ENCODE measurements at regions of chr5 and their contacts with region 1.

Region 1: DNA sequence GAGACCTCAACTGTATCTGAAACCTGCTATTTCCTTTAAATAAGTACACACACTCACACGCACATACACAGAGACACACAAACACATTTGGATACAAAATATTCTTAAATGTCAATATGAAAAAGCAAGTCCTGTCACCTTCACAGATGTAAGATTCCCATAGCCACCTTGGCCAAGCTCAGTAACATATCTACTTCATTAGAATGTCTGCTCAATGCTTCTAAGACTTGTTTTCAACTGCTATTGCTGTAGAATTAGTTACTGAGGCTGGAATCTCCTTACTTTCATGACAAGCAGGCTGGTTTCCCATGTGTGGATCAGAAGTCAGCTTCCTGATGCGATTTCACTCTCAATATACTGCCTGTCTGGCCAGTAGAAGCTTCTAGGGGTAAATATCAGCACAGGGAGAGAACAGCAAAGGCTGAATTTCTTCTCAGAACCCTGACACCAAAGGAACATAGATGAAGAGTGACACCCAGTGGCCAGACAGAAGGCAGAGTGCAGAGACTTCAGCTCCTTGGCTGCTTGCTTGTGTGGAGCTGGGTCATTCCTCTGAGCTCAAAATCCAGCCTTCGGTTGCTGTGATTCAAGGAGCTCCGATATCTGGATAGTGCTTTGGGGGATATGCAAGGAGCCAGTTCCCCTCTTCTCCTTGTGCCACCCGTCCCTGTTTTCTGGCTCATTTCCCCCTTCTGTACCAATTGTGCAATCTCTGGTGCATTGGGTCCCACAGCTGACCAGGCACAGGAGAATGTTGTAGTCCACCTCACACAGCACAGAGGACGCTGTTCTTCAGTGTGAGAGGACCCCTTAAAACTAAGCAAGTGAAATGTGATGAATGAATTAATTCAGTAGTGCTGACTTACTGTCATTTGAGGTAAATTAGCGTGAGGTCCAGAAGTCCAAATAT is 26.6 kb upstream of the ABLIM3 start:
- DNase-seq: peak; percentile 59
- ATAC-seq: peak; percentile 99
- H3K4me3 Mint-ChIP-seq: no peak overlapping the region
- H3K27ac Mint-ChIP-seq: no peak overlapping the region
- H3K4me1 Mint-ChIP-seq: no peaks in the 10 kb centered on the region
- H3K27me3 Mint-ChIP-seq: no peaks in the 10 kb centered on the region; the same call in 1 of the 2 replicates
- CTCF ChIP-seq: peak; percentile 48

Region 2: DNA sequence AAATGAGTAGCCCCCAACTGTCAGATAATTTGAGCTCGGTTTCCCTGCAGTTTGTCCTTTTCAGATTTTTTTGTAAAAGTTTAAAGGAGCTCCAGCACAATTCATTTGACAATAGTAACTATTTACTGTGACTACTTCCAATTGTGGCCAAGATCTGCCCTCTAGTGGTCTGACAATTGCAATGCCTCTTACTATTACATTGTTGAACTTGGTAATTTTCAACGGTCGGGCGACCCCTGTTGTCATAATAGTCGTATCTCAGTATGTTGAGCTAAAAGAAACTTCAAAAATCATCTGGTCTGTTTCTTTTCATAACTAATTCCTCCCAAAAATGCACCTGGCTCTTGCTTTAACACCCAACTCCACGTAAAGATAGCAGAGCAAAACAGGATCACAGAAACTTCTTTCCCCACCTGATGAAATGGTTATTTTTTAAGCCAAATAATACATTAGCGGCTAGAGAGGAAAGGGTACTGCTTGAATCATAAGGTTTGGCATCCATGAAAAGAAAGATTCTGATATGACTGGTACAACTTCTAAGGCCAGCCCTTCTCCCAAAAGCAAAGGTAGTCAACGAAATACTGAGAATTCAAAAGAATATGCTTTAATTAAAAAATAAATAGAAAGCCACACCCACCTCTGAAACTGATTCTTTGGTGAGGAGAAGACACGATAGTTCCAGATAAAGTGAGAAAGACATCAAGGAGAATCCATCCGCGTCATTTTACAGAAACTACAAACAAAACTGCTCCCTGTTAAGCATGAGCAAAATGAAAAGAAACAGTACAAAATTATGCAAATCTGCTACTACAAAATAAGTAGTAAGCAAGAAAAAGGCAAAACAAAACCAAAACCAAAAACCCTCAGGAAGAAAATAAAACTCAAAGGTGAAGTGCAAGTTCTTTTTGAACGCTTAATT is 383.5 kb before region 1 on chr5:
- CTCF ChIA-PET with region 1: interaction called, 78 read pairs
- POLR2A ChIA-PET with region 1: no interaction called
- DNase-seq: peak; percentile 59
- ATAC-seq: peak; percentile 77
- H3K4me3 Mint-ChIP-seq: no peak overlapping the region
- H3K27ac Mint-ChIP-seq: no peak overlapping the region
- H3K4me1 Mint-ChIP-seq: peaks cover 18% of the 10 kb centered on the region
- H3K27me3 Mint-ChIP-seq: no peaks in the 10 kb centered on the region
- CTCF ChIP-seq: peak; percentile 64

Region 3: DNA sequence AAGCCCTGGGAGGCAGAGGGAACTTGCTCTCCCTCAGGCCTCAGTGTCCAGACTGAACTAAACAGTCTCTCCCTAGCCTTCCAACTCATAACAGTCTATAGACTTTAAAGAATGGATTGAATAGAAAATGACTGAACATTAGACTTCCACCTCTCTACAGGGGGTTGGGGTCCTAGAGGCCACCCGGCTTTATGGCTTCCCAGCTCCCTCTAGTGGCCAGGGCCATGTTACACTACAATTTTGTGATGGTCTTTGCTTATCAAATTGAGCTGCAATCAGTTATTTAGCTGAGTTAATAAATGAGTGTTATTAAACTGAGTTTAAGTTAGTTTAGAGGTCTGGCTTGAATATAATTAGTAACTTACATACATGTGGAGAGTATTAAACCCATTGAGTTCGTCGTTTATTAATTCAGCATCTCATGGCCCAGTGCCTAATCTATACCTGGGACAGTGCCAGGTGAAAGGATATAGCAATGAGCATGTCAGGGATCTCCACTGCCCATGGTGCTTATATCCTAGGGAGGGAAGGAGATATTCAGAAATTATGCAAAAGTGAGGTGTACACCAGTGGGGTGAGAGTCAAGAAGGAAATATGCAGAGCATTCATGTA is 157.0 kb before region 1 on chr5:
- CTCF ChIA-PET with region 1: interaction called, 39 read pairs
- POLR2A ChIA-PET with region 1: no interaction called
- DNase-seq: peak; percentile 74
- ATAC-seq: no peak; the same call in 1 of the 2 replicates
- H3K4me3 Mint-ChIP-seq: no peak overlapping the region
- H3K27ac Mint-ChIP-seq: no peak overlapping the region
- H3K4me1 Mint-ChIP-seq: peaks cover 23% of the 10 kb centered on the region
- H3K27me3 Mint-ChIP-seq: peaks cover 8% of the 10 kb centered on the region
- CTCF ChIP-seq: peak; percentile 85

Region 4: DNA sequence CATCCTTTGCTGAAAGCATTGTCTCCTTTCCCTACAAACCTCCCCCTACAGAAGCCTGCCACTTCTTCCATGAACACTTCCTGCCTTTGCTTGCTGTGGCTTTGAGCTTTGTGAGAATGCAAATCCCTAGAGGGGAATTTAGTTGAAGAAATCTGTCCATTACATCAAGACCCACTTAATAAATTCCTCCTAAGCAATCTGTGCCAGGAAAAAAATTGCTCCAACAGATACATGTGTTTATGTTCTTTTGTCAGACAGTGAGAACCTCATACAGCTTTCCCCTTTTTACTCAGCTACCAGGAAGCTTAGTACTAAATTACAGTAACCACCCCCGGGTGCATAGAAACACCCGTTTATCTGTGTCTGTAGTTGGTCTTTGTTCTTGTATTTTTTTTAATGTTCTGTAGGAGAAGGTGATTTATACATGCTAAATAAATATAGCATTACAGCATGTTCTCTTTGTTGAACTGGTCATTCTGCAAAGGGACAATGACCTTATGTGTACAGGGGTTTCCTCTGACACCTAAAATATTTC is 95.7 kb before region 1 on chr5:
- CTCF ChIA-PET with region 1: interaction called, 14 read pairs
- POLR2A ChIA-PET with region 1: no interaction called
- DNase-seq: no peak
- ATAC-seq: peak; percentile 51; the same call in 1 of the 2 replicates
- H3K4me3 Mint-ChIP-seq: no peak overlapping the region
- H3K27ac Mint-ChIP-seq: no peak overlapping the region
- H3K4me1 Mint-ChIP-seq: peaks cover 16% of the 10 kb centered on the region
- H3K27me3 Mint-ChIP-seq: no peaks in the 10 kb centered on the region
- CTCF ChIP-seq: no peak

Region 5: DNA sequence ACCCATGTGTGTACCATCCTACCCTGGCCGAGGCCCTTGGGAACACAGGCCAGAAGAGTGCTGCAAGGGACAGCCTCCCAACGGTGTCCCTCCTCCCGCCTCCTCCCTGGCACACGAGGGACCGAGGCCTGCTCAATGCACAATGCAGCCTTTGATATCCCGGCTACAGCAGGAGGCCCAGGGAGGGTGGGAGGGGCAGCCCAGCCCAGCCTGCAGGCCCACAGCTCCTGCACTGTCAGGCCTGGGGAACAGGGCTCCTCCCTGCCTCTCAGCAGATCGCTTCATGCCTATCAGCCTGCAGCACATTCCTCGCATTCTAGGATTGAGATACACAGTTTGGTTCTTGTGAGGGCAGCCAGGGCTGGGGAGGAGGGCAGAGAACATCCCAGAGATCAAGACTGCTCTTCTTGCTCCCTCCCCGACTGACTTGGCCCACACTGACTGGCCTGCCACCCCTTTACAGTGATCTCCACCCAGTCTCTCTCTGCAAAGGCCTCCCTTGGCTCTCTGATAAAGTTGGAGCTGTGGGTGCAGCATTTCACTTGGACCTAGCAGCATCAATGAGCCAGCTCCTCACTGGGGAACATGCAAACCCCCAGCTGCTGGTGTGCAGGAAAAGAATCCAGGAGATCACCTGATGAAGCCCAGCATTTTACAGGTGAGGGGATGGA is 51.5 kb before region 1 on chr5 and contains the start of gene SH3TC2:
- CTCF ChIA-PET with region 1: interaction called, 10 read pairs
- POLR2A ChIA-PET with region 1: no interaction called
- DNase-seq: peak; percentile 66
- ATAC-seq: peak; percentile 99
- H3K4me3 Mint-ChIP-seq: no peak within 1 kb of the TSS
- H3K27ac Mint-ChIP-seq: no peak within 1 kb of the TSS
- H3K4me1 Mint-ChIP-seq: peaks cover 15% of the 10 kb centered on the region
- H3K27me3 Mint-ChIP-seq: no peaks in the 10 kb centered on the region
- CTCF ChIP-seq: no peak
- total RNA-seq, gene SH3TC2: 0.18 to 0.78 TPM (median 0.61 TPM) in 3 replicates

Region 6: GRCh38 chr5:149162401-149163084 is 47.9 kb after region 1 on chr5:
- CTCF ChIA-PET with region 1: no interaction called
- POLR2A ChIA-PET with region 1: no interaction called
- DNase-seq: no peak
- ATAC-seq: no peak
- H3K4me3 Mint-ChIP-seq: no peak overlapping the region
- H3K27ac Mint-ChIP-seq: no peak overlapping the region
- H3K4me1 Mint-ChIP-seq: no peaks in the 10 kb centered on the region
- H3K27me3 Mint-ChIP-seq: no peaks in the 10 kb centered on the region
- CTCF ChIP-seq: no peak

Region 7: GRCh38 chr5:149228618-149229297 is 114.1 kb after region 1 on chr5:
- CTCF ChIA-PET with region 1: interaction called, 14 read pairs
- POLR2A ChIA-PET with region 1: no interaction called
- DNase-seq: no peak
- ATAC-seq: peak; percentile 92
- H3K4me3 Mint-ChIP-seq: no peak overlapping the region
- H3K27ac Mint-ChIP-seq: no peak overlapping the region
- H3K4me1 Mint-ChIP-seq: peaks cover 12% of the 10 kb centered on the region
- H3K27me3 Mint-ChIP-seq: no peaks in the 10 kb centered on the region; the same call in none of the 2 replicates
- CTCF ChIP-seq: no peak

Measured in WTC11 (cell line).